ENCODE measurements at regions of chr11 and their contacts with region 1.

Region 1: GRCh38 chr11:85664615-85665481 is at the start of gene CREBZF:
- DNase-seq: peak; percentile 93
- H3K4me3 ChIP-seq: peak within 1 kb of the TSS; percentile 94 to 95
- H3K27ac ChIP-seq: peak within 1 kb of the TSS; percentile 92 to 95
- H3K4me1 ChIP-seq: peaks cover 14 to 18% of the 10 kb centered on the region in 2 experiments; a peak in 3 of 4 replicates
- H3K27me3 ChIP-seq: no peaks in the 10 kb centered on the region
- CTCF ChIP-seq: no peak
- EP300 ChIP-seq: no peak
- RAD21 ChIP-seq: no peak
- polyA plus RNA-seq, gene CREBZF: 50.5 and 62.1 TPM in 2 replicates

Region 2: DNA sequence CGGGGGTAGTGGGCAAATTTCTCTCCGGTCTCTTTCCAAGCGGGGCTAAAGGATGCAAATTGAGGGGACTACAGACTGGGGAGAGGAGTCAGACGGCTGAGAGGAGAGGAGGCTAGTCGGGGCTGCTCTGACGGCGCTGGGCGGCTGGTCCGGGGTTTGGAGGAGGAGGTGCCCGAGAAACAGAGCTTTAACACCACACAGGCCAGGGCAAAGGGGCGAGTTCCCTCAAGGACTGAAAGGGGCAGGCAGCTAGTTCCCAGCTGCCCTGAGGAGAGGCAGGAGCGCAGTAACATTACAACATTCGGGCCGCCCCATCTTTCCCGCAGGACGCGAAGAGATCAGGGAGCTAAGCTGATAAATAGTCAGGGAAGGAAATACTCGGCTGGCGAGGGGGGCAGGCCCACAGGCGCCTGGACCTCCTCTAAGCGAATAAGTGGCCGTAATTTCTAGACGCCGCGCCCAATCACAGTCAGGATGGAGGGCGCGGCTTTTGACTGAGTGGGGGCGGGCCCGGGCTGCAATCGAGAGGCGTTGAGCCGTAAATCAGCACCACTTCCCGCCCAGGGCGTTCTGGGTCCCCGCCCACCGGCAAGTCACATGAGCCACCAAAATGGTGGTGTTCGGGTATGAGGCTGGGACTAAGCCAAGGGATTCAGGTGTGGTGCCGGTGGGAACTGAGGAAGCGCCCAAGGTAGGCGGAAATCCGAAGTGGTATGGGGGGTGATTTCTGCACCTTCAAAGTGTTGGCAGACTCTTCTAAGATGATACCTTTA is 36.7 kb before region 1 on chr11 and contains the start of gene TMEM126B:
- CTCF ChIA-PET with region 1: interaction called, 4 read pairs
- POLR2A ChIA-PET with region 1: interaction called, 14 read pairs
- DNase-seq: peak; percentile 84
- H3K4me3 ChIP-seq: peak within 1 kb of the TSS; percentile 72 to 87
- H3K27ac ChIP-seq: peak within 1 kb of the TSS; percentile 68 to 84
- H3K4me1 ChIP-seq: peaks cover 0 to 3% of the 10 kb centered on the region in 2 experiments; a peak in 3 of 4 replicates
- H3K27me3 ChIP-seq: no peaks in the 10 kb centered on the region
- CTCF ChIP-seq: no peak
- EP300 ChIP-seq: no peak; a peak in 1 of 4 replicates
- RAD21 ChIP-seq: no peak
- polyA plus RNA-seq, gene TMEM126B: 27.7 and 45.0 TPM in 2 replicates

Region 3: DNA sequence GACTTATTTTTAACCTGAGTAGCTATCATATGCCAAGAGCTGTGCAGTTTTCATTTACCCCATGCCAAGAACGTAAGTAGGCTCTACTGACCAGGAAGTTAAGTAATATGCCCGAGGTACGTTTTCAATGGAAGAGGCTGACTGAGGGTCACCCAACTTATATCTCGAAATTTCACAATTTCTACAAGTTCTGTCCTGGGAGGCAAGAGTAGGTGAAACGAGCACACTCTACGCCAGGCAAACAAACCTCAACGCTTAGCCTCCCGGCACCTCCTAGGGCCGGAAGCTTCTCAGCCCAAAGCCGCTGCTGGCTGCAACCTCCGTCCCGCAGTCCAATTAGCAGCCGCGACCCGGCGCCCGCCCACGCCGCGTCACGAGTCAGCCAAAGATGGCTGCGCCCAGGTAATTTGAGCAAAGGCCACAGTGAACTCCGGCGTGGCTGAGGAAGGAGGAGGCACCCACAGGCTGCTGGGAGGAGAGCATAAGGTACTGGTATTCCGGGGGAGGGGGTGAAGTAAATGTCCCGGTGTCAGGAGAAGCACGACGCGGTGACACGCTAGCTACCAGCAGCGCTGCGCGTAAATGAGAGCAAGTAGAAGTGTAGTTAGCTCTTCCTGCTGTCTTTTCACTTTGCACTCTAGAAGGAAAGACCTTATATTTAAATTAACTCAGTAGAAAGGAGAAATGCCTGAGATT is 17.1 kb before region 1 on chr11 and contains the start of gene TMEM126A:
- CTCF ChIA-PET with region 1: interaction called, 15 read pairs
- POLR2A ChIA-PET with region 1: interaction called, 23 read pairs
- DNase-seq: peak; percentile 84
- H3K4me3 ChIP-seq: peak within 1 kb of the TSS; percentile 75 to 91
- H3K27ac ChIP-seq: peak within 1 kb of the TSS; percentile 61 to 88
- H3K4me1 ChIP-seq: peaks cover 7 to 17% of the 10 kb centered on the region in 2 experiments; a peak in 3 of 4 replicates
- H3K27me3 ChIP-seq: no peaks in the 10 kb centered on the region
- CTCF ChIP-seq: no peak
- EP300 ChIP-seq: 0 out of 4 replicates have a peak, but pooled peaks of 1 of the 2 experiments have one; percentile 8
- RAD21 ChIP-seq: no peak; the same call in 1 of the 2 replicates
- polyA plus RNA-seq, gene TMEM126A: 30.5 and 37.1 TPM in 2 replicates

Region 4: GRCh38 chr11:85685820-85686459 is 21.1 kb after region 1 on chr11 and contains the start of gene CCDC89:
- CTCF ChIA-PET with region 1: interaction called, 8 read pairs
- POLR2A ChIA-PET with region 1: interaction called, 16 read pairs
- DNase-seq: peak; percentile 79
- H3K4me3 ChIP-seq: peak within 1 kb of the TSS; percentile 56 to 59
- H3K27ac ChIP-seq: peak within 1 kb of the TSS; percentile 81 to 85
- H3K4me1 ChIP-seq: peaks cover 0 to 14% of the 10 kb centered on the region in 2 experiments; a peak in 3 of 4 replicates
- H3K27me3 ChIP-seq: no peaks in the 10 kb centered on the region
- CTCF ChIP-seq: no peak
- EP300 ChIP-seq: 0 out of 4 replicates have a peak, but pooled peaks of 1 of the 2 experiments have one; percentile 5
- RAD21 ChIP-seq: no peak
- polyA plus RNA-seq, gene CCDC89: 3.9 and 4.1 TPM in 2 replicates

Measured in SK-N-SH (cell line).